Common myeloid progenitor, CD34-positive (primary cell): ENCODE measurements at regions of chr16 and their contacts with region 1.

Region 1: GRCh38 chr16:714558-715476 is at the start of gene METRN:
- DNase-seq: peak; percentile 81 to 87 (median 85)
- H3K4me3 ChIP-seq: peak within 1 kb of the TSS in 6 of 7 experiments; percentile 19 to 66 (median 60)
- H3K27ac ChIP-seq: no peak within 1 kb of the TSS
- H3K4me1 ChIP-seq: peaks cover 0 to 35% (median 31%) of the 10 kb centered on the region in 4 experiments
- H3K27me3 ChIP-seq: peaks cover 0 to 56% (median 9%) of the 10 kb centered on the region in 5 experiments

Region 2: DNA sequence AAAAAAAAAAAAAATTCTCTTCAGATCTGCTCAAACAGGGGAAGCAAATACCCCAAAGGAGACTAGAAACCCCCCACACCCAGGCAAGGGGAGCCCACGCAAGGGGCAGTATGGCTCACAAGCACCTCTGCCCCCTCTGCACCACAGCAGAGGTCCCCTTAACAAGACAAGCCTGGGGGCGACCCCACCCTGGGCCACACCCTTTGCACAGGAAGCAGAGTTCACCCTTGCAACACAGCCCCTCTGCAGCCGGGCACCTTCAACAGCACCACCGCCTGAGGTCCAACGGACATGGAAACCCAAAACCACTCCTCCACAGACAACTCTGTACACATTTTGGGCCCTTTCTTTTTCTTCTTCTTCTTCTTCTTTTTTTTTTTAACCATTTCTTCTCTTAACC is 375.1 kb before region 1 on chr16:
- CTCF ChIA-PET with region 1: no interaction called
- POLR2A ChIA-PET with region 1: no interaction called
- DNase-seq: peak in 2 of 3 donors; percentile 56 to 64
- H3K4me3 ChIP-seq: peak overlapping the region in 3 of 7 experiments; percentile 8 to 34 (median 28)
- H3K27ac ChIP-seq: peak overlapping the region in 1 of 2 experiments; percentile 14
- H3K4me1 ChIP-seq: peaks cover 0 to 47% (median 32%) of the 10 kb centered on the region in 4 experiments
- H3K27me3 ChIP-seq: no peaks in the 10 kb centered on the region

Region 3: GRCh38 chr16:610513-611334 is 104.1 kb before region 1 on chr16:
- CTCF ChIA-PET with region 1: no interaction called
- POLR2A ChIA-PET with region 1: no interaction called
- DNase-seq: peak; percentile 36 to 65 (median 59)
- H3K4me3 ChIP-seq: no peak overlapping the region
- H3K27ac ChIP-seq: no peak overlapping the region
- H3K4me1 ChIP-seq: no peaks in the 10 kb centered on the region
- H3K27me3 ChIP-seq: no peaks in the 10 kb centered on the region

Region 4: DNA sequence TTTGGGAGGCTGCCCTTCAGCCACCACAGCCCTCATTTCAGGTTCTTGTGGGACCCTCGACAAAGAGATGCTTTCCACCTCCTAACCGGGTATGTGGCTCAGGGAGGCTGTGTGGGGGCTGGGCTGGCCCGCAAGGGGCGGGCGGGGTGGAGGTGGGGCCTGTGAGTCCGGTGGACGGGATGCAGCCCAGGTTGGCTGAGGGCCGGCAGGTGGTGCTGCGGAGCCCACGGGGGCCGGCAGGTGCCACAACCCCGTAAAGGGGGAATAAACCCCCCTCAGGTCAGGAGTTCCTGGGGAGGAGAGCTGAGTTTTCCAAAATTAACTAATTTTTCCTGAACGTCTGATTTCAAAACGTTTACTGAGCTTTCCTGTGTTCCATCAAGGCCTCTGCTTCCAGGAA is 30.9 kb after region 1 on chr16:
- CTCF ChIA-PET with region 1: interaction called, 15 read pairs
- POLR2A ChIA-PET with region 1: interaction called, 5 read pairs
- DNase-seq: peak; percentile 36 to 46 (median 44)
- H3K4me3 ChIP-seq: no peak overlapping the region
- H3K27ac ChIP-seq: no peak overlapping the region
- H3K4me1 ChIP-seq: peaks cover 0 to 6% (median 3%) of the 10 kb centered on the region in 4 experiments
- H3K27me3 ChIP-seq: no peaks in the 10 kb centered on the region